ENCODE measurements at regions of chr10 and their contacts with region 1.

Region 1: GRCh38 chr10:5830629-5831445 is 17.6 kb upstream of the GDI2 start:
- DNase-seq: no peak
- CTCF ChIP-seq: no peak

Region 2: DNA sequence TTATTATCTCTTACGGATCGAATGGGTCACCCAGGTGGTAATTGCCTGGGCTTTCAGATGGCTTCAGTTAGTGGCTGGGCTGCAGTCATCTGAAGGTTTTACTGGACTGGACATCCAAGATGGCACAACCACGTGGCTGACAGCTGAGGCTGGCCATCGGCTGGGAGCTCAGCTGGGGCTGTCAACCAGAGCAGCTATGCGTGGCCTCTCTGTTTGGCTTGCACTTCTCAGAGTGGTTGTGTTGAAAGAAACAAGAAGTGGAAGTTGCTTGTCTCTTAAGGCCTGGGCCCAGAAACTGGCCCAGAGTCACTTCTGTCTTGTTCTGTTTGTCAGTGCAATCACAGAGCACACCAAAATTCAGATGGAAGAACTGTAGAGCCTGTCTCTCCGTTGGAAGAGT is 11.9 kb before region 1 on chr10:
- CTCF ChIA-PET with region 1: interaction called, 12 read pairs
- POLR2A ChIA-PET with region 1: interaction called, 7 read pairs
- DNase-seq: peak; percentile 44
- CTCF ChIP-seq: no peak

Measured in GM10248 (cell line).